Motor neuron (in vitro differentiated cells): ENCODE measurements at regions of chr2 and their contacts with region 1.

Region 1: GRCh38 chr2:22355816-22356433 is 1029.1 kb upstream of the KLHL29 start:
- ATAC-seq: peak in 2 of 8 experiments; percentile 41 to 50
- H3K4me3 ChIP-seq: no peak overlapping the region
- H3K27ac ChIP-seq: no peak overlapping the region
- H3K4me1 ChIP-seq: no peaks in the 10 kb centered on the region

Region 2: DNA sequence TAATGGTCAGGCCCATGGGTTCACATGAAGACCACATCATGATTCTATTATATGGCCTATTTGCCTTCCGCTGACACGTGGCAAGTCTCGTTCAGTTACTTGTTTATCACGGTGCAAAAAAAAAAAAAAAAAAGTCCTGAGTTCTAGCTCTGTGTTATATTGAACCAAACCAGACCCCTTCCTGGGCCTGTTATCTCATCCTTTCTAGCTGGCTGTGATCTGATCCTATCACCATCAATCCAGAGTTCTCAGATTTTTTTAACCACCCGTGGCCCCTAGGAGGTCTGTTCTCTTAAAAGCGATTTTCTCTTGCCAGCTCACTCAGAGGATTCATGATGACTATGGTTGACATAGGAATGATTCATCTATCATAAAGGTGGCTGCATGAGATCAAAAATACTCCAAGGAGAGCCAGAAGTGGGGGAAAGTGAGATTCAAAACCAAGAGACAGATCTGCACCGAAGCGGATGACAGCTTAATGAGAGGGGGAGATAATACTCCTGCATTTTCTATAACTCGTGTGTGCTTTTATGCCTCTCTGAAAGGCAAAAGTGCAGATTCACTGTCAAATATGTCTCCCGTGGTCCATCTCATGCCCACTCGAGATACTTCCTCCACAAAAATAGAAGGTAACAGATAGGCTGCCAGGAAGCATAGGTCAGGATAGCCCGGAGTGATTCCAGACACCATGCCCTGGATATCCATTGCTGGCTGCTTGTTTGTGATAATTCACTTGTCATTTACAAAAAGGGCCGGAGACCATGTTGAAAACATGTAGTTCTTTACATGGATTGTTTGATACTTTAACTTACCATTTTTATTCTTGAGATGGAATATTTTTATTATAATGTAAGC is 523.3 kb after region 1 on chr2:
- in situ Hi-C with region 1: no loop called
- ATAC-seq: no peak
- H3K4me3 ChIP-seq: no peak overlapping the region
- H3K27ac ChIP-seq: no peak overlapping the region
- H3K4me1 ChIP-seq: peaks cover 3 to 4% of the 10 kb centered on the region in 2 donors

Region 3: GRCh38 chr2:23330214-23330613 is 974.3 kb after region 1 on chr2:
- in situ Hi-C with region 1: loop called in 1 of 9 experiments (anchors 25 kb)
- ATAC-seq: peak in 3 of 8 experiments; percentile 44 to 49 (median 45)
- H3K4me3 ChIP-seq: no peak overlapping the region
- H3K27ac ChIP-seq: no peak overlapping the region
- H3K4me1 ChIP-seq: no peaks in the 10 kb centered on the region